Upper lobe of right lung (tissue), 1 donor: ENCODE measurements at regions of chr7 and their contacts with region 1.

Region 1: GRCh38 chr7:38222481-38223096 is 44.5 kb downstream of the STARD3NL start:
- DNase-seq: no peak
- ATAC-seq: peak; percentile 94
- H3K4me3 ChIP-seq: no peak overlapping the region
- H3K27ac ChIP-seq: no peak overlapping the region
- H3K4me1 ChIP-seq: peaks cover 10% of the 10 kb centered on the region
- H3K27me3 ChIP-seq: no peaks in the 10 kb centered on the region
- CTCF ChIP-seq: peak; percentile 91

Region 2: GRCh38 chr7:38102507-38102906 is 120.1 kb before region 1 on chr7:
- intact Hi-C with region 1: loop called (anchors 5 kb)
- DNase-seq: no peak
- ATAC-seq: no peak
- H3K4me3 ChIP-seq: no peak overlapping the region
- H3K27ac ChIP-seq: no peak overlapping the region
- H3K4me1 ChIP-seq: no peaks in the 10 kb centered on the region
- H3K27me3 ChIP-seq: no peaks in the 10 kb centered on the region
- CTCF ChIP-seq: no peak

Region 3: GRCh38 chr7:38369816-38370493 is 147.4 kb after region 1 on chr7:
- intact Hi-C with region 1: no loop called
- DNase-seq: peak; percentile 94
- ATAC-seq: peak; percentile 97
- H3K4me3 ChIP-seq: no peak overlapping the region
- H3K27ac ChIP-seq: no peak overlapping the region
- H3K4me1 ChIP-seq: peaks cover 24% of the 10 kb centered on the region
- H3K27me3 ChIP-seq: no peaks in the 10 kb centered on the region
- CTCF ChIP-seq: peak; percentile 89